BJ (cell line): ENCODE measurements at regions of chr1 and their contacts with region 1.

Region 1: GRCh38 chr1:239898062-239898730 is 193.5 kb upstream of the FMN2 start:
- DNase-seq: no peak
- H3K4me3 ChIP-seq: no peak overlapping the region
- H3K27me3 ChIP-seq: no peaks in the 10 kb centered on the region
- CTCF ChIP-seq: peak; percentile 94

Region 2: GRCh38 chr1:239909898-239910297 is 11.7 kb after region 1 on chr1:
- CTCF ChIA-PET with region 1: interaction called, 10 read pairs
- POLR2A ChIA-PET with region 1: no interaction called
- DNase-seq: no peak
- H3K4me3 ChIP-seq: no peak overlapping the region
- H3K27me3 ChIP-seq: no peaks in the 10 kb centered on the region
- CTCF ChIP-seq: no peak